Panc1 (cell line): ENCODE measurements at regions of chr18 and their contacts with region 1.

Region 1: GRCh38 chr18:26135548-26135947 is 1.9 kb downstream of the PSMA8 start:
- DNase-seq: no peak
- ATAC-seq: no peak
- H3K4me3 ChIP-seq: no peak overlapping the region
- H3K27ac ChIP-seq: no peak overlapping the region
- H3K4me1 ChIP-seq: no peaks in the 10 kb centered on the region
- H3K27me3 ChIP-seq: no peaks in the 10 kb centered on the region; the same call in 1 of the 2 replicates
- CTCF ChIP-seq: no peak

Region 2: DNA sequence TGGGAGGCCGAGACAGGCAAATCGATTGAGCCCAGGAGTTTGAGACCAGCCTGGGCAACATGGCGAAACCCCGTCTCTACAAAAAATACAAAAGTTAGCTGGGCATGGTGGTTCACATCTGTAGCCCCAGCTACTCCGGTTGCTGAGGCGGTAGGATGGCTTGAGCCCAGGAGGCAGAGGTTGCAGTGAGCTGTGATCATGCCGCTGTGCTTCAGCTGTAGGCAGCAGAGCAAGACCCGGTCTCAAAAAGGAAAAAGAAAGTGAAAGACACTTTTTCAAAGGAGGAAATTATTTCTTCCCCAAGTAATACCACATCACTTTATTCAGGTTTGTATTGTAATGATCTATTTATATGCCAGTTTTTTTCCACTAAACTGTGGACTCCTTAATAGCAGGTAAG is 55.0 kb after region 1 on chr18:
- CTCF ChIA-PET with region 1: no interaction called
- POLR2A ChIA-PET with region 1: no interaction called
- in situ Hi-C with region 1: no loop called
- intact Hi-C with region 1: loop called (anchors 10 kb)
- DNase-seq: no peak
- ATAC-seq: no peak
- H3K4me3 ChIP-seq: peak overlapping the region; percentile 6 to 34; a peak in 3 of 4 replicates
- H3K27ac ChIP-seq: no peak overlapping the region
- H3K4me1 ChIP-seq: no peaks in the 10 kb centered on the region
- H3K27me3 ChIP-seq: no peaks in the 10 kb centered on the region
- CTCF ChIP-seq: no peak